Calu3 (cell line): ENCODE measurements at regions of chr5 and their contacts with region 1.

Region 1: GRCh38 chr5:164975986-164976385 is 1470.6 kb downstream of the MAT2B start:
- DNase-seq: no peak
- H3K4me3 Mint-ChIP-seq: no peak overlapping the region
- H3K27ac Mint-ChIP-seq: no peak overlapping the region
- H3K4me1 Mint-ChIP-seq: peaks cover 8% of the 10 kb centered on the region
- H3K27me3 Mint-ChIP-seq: no peaks in the 10 kb centered on the region
- CTCF ChIP-seq: no peak

Region 2: GRCh38 chr5:164170814-164171213 is 805.2 kb before region 1 on chr5:
- CTCF ChIA-PET with region 1: no interaction called
- intact Hi-C with region 1: no loop called
- DNase-seq: no peak
- H3K4me3 Mint-ChIP-seq: no peak overlapping the region
- H3K27ac Mint-ChIP-seq: no peak overlapping the region
- H3K4me1 Mint-ChIP-seq: peaks cover 13% of the 10 kb centered on the region
- H3K27me3 Mint-ChIP-seq: no peaks in the 10 kb centered on the region
- CTCF ChIP-seq: no peak

Region 3: DNA sequence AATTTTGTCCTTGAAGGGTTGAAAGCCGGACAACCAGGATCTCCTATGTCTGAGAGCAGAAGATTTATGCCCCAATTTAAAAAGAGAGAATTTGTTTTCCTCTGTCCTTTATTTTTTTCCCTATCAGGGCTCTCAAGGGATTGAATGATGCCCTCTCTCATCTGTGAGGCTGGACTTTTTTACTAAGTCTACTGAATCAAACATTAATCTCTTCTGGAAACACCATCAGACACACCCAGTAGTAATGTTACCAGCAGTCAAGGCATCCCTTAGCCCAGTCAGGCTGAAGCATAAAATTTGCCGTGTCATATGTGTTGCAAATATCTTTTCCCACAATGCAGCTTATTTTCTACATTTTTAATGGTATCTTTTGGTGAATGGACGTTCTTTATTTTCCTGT is 27.3 kb after region 1 on chr5:
- CTCF ChIA-PET with region 1: no interaction called
- intact Hi-C with region 1: loop called (anchors 2 kb)
- DNase-seq: no peak
- H3K4me3 Mint-ChIP-seq: no peak overlapping the region
- H3K27ac Mint-ChIP-seq: no peak overlapping the region
- H3K4me1 Mint-ChIP-seq: no peaks in the 10 kb centered on the region
- H3K27me3 Mint-ChIP-seq: no peaks in the 10 kb centered on the region
- CTCF ChIP-seq: no peak